ENCODE measurements at regions of chr11 and their contacts with region 1.

Region 1: GRCh38 chr11:7548659-7549274 is 35.0 kb downstream of the PPFIBP2 start:
- DNase-seq: peak; percentile 58
- CTCF ChIP-seq: peak; percentile 71

Region 2: DNA sequence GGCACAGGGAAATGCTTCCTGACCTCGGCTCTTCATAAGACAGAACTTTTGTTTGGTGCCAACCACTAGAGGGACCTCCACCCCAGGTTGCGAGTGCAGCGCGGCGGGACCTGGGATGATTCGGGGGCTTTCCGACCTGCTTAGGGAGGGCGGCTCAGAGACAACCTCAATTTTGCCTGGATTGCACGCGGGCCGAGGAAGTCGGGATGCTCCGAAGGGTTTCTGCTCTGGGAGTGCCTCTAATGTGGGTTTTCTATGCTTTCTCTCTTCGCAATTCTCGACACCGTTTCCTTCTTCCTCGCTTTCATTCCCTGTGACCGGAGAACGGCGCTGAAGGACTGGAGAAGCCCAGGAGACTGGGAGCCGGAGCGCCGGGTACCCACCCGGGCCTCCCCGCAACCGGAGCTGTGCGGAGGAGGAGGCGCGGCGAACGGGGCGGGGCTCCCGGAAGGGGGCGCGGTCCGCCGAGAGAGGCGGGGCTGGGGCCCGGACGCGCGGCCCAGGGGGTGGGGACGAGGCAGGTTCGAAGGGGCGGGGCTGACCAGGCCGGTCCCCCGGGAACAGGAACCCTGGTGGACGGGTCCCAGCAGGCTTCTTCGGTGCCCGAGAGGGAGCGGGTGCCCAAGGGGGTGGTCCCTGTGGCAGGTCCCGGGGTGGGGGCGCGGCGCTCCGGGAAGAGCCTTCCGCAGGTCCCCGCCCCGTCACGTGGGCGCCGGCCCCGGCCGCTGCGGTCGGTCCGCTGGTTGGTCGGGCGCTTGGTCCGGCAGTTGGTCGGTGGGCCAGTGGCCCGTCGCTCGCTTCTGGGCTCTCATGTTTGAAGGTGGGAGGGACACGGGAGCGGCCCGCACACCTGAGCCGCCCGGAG is 35.3 kb before region 1 on chr11 and contains the start of gene PPFIBP2:
- CTCF ChIA-PET with region 1: interaction called, 36 read pairs
- POLR2A ChIA-PET with region 1: interaction called, 3 read pairs
- DNase-seq: peak; percentile 92
- CTCF ChIP-seq: peak; percentile 60

Region 3: DNA sequence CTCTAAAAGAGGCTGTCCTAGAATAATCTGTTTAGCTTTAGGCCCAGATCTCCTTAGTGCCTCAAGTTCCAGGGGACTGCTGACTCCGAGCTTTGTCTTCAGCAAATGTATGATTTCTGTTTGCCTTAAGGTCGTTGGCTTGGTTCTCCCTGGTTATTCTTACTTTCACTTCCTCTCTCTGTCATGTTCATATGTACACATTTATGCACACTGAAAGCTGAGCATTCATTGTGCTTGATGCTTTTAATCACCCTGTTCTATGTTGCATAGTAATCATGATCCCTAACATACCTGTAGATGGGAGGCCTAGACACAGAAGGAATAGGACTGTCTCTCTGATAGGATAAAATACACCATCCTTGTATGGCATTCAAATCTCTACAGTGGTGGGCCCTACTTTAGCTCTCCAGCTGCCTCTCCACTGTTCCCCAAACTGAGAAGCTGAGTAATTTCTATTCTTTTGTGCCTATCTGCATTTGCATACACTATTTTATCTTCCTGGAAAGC is 27.7 kb before region 1 on chr11:
- CTCF ChIA-PET with region 1: interaction called, 36 read pairs
- POLR2A ChIA-PET with region 1: no interaction called
- DNase-seq: peak; percentile 51
- CTCF ChIP-seq: no peak

Region 4: DNA sequence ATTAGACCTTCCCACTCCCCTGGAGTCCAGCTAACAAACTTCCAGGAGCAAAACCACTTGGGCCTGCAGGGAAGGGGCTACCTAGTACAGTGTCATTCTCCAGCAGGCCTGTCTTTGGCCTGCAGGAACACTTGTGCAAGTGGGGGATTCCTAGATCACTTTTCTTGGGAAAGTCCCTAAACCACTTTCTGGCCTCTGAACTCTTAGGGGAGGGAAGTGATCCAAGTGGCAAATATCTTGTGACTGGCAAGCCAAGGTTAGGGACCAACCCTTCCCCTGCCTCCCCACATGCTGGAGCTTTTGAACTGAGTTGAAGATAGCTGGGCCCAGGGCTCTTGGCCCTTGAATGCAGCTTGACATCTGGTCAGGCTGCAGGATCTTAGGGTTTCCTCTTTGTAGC is 17.8 kb before region 1 on chr11:
- CTCF ChIA-PET with region 1: interaction called, 24 read pairs
- POLR2A ChIA-PET with region 1: no interaction called
- DNase-seq: no peak
- CTCF ChIP-seq: no peak

Region 5: DNA sequence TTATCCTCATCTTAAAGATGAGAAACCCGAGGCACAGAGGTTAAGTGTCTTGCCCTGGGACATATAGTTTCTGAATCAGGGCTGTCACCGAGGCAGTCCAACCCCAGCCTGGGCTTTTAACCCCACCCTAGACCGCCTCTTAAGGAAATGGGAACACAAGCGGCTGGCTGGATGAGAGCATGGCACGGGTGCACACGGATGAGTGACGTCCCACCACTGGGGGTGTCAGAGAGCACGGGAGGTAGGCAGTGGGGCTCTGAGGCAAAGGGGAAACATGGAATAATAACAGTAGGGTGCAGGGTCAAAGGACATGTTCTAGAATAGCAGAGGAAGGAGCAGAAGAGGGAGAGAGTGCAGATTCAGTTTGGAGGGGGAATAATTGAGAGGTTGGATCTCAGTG is 12.7 kb before region 1 on chr11:
- CTCF ChIA-PET with region 1: interaction called, 37 read pairs
- POLR2A ChIA-PET with region 1: no interaction called
- DNase-seq: no peak
- CTCF ChIP-seq: no peak

Region 6: GRCh38 chr11:7559398-7560283 is 10.9 kb after region 1 on chr11:
- CTCF ChIA-PET with region 1: interaction called, 37 read pairs
- POLR2A ChIA-PET with region 1: no interaction called
- DNase-seq: no peak
- CTCF ChIP-seq: no peak

Region 7: DNA sequence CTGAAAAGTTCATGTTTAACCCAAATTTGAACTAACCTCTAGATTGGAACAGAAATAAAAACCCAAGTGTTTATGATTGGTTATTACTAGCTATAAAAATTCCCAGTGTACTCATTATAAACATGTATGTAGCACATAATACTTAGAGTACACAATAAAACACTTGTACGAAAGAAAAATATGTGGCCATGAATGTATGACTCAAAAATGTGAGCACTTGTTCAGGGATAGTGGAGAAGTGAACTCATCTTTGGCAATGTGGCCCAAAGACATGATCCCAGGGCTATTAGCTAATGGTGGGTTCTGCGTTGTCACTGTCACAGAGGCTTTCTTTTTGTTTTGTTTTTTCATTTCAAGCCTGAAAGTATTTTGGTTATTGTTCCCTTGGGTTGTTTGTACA is 37.0 kb after region 1 on chr11:
- CTCF ChIA-PET with region 1: interaction called, 14 read pairs
- POLR2A ChIA-PET with region 1: no interaction called
- DNase-seq: no peak
- CTCF ChIP-seq: no peak

Region 8: GRCh38 chr11:7651140-7651551 is 102.4 kb after region 1 on chr11:
- CTCF ChIA-PET with region 1: no interaction called
- POLR2A ChIA-PET with region 1: no interaction called
- DNase-seq: no peak
- CTCF ChIP-seq: no peak